ENCODE measurements at regions of chr12 and their contacts with region 1.

Region 1: GRCh38 chr12:93677195-93678064 is at the start of gene CRADD:
- DNase-seq: peak; percentile 92
- H3K4me3 ChIP-seq: peak within 1 kb of the TSS; percentile 61 to 74 (median 68)
- H3K27ac ChIP-seq: peak within 1 kb of the TSS; percentile 90 to 97 (median 94)
- H3K4me1 ChIP-seq: peaks cover 0 to 42% (median 31%) of the 10 kb centered on the region in 4 donors
- H3K27me3 ChIP-seq: no peaks in the 10 kb centered on the region
- CTCF ChIP-seq: no peak
- EP300 ChIP-seq: peak in 2 of 4 donors; percentile 3 to 50
- POLR2A ChIP-seq: peak; percentile 51 to 72
- total RNA-seq, gene CRADD: 43.7 to 98.9 (median 61.0) TPM

Region 2: DNA sequence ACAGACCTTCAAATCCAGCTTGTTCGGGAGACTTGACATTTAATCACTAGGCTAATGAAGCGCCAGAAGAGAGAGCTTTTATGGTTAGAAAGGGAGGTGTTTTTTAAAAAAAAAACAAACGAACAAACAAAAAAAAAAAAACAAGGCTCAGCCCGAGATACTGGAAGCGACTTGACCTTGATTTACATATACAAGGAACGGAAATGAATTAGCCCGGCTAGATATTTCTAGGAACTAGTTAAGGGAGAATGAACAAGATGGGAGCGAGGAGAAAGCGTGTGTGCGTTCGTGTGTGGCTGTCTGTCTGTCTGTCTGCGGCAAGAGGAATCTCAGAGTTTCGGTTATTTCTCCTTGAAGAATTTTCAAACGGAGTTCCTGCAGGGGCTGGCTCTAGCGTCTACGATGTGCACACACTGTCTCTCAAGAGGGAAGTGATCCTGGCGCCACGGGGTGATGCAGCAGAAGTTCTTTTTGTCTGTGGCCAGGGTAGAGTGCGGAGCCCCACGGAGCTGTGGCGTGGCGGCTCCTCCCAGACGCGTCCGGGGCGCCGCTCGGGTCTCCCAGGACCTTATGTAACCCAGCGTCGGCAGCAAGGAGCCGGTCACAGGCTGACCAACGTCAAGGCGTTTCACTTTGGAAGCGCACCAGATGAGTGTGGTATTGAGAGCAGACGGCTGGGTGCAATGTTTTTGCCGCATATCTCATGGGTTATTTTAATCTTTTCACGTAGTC is 86.1 kb before region 1 on chr12:
- intact Hi-C with region 1: loop called (anchors 5 kb)
- DNase-seq: peak; percentile 94
- H3K4me3 ChIP-seq: peak overlapping the region; percentile 46 to 58 (median 54)
- H3K27ac ChIP-seq: peak overlapping the region; percentile 80 to 88 (median 84)
- H3K4me1 ChIP-seq: peaks cover 0 to 29% (median 12%) of the 10 kb centered on the region in 4 donors
- H3K27me3 ChIP-seq: no peaks in the 10 kb centered on the region
- CTCF ChIP-seq: no peak
- EP300 ChIP-seq: peak in 1 of 4 donors; percentile 52
- POLR2A ChIP-seq: peak; percentile 38 to 60

Region 3: DNA sequence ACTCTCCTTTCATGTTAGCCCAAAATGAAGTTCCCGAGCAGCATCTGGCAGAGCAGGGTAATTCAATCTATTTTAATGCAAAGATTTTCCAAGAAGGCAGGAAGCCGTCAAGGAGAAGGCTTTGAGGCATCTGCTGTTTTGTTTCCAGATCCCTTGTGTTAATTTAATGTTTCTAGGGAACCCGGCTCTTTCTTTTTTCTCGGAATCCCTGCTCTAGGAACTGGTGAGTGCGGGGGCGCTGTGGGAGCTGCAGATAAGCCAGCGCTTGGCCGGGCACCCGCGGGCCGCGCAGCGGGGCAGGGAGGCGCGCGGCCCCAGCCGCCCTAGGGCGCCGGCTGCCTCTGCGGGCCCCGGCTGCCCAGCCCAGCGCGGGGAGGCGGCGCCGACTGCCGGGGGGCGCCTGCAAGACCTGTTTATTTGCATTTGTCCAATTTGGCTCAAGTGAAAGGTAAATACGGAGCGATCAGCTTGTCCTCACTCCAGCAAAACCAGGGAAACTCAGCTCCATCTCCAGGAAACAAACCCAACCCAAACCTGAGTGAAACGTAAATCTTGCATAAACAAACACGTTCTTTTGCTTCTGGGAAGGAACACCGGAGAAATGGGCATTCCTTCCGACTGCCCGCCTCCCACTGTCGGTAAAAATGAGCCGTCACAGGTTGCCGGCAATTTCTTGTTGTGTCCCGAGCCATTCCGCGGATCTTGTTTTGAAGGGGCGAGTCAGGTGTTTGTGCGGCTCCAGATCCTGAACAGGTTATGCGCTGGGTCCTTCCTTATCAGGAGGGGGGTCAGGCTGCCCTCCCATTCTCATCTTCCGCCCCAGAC is 64.9 kb after region 1 on chr12:
- intact Hi-C with region 1: loop called (anchors 2 kb)
- DNase-seq: peak; percentile 82
- H3K4me3 ChIP-seq: peak overlapping the region; percentile 43 to 62 (median 57)
- H3K27ac ChIP-seq: peak overlapping the region; percentile 86 to 94 (median 90)
- H3K4me1 ChIP-seq: peaks cover 0 to 71% (median 50%) of the 10 kb centered on the region in 4 donors
- H3K27me3 ChIP-seq: no peaks in the 10 kb centered on the region
- CTCF ChIP-seq: peak in 2 of 4 experiments; percentile 19 to 32
- EP300 ChIP-seq: peak in 2 of 4 donors; percentile 69 to 75
- POLR2A ChIP-seq: no peak

Region 4: DNA sequence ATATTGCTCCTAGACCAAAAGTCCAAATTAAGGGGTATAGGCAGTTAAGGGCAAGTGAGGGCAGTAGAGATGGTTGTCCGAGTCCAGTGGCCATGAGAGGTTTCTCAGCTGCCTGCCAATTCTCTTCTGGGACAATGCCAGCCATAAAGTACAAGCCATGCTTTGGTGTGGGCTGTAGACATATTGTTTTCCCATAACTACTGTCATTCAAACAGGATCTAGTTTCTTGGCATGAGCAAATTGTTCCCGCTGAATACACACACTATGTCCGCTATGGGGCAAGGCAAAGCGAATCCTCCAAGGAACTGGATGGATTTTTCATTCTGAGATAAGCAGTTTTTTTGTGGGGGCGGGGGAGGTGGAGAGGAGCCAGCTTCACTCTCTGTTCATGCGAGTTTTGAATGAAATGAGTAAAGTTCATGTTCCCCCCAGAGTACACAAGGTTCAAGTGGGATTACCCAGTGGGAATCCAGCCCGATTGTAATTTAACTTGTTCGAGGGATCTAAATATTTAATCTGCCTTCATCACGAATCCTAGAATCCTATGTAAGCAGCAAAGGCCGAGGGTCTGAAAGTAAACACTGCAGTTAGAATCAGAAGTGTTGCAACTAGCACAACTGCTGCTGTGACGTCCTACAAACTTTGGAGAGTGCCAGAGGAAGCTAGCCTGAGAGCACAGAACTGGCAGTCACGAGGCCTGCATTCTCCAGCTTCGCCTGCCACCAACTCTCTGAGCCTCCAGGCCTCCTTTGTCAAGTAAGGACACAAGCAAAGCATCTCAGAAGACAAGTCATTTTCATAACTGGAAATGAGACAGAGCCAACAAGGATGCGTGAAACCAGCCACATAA is 136.8 kb after region 1 on chr12:
- intact Hi-C with region 1: loop called (anchors 10 kb)
- DNase-seq: peak; percentile 97
- H3K4me3 ChIP-seq: no peak overlapping the region
- H3K27ac ChIP-seq: peak overlapping the region; percentile 85 to 91 (median 90)
- H3K4me1 ChIP-seq: peaks cover 0 to 78% (median 67%) of the 10 kb centered on the region in 4 donors
- H3K27me3 ChIP-seq: no peaks in the 10 kb centered on the region
- CTCF ChIP-seq: no peak
- EP300 ChIP-seq: peak; percentile 71 to 95 (median 88)
- POLR2A ChIP-seq: no peak

Region 5: GRCh38 chr12:93979189-93979588 is 301.8 kb after region 1 on chr12:
- intact Hi-C with region 1: loop called (anchors 10 kb)
- DNase-seq: no peak
- H3K4me3 ChIP-seq: no peak overlapping the region
- H3K27ac ChIP-seq: no peak overlapping the region
- H3K4me1 ChIP-seq: peaks cover 0 to 7% (median 0%) of the 10 kb centered on the region in 4 donors
- H3K27me3 ChIP-seq: no peaks in the 10 kb centered on the region
- CTCF ChIP-seq: peak in 2 of 4 experiments; percentile 29 to 36
- EP300 ChIP-seq: no peak
- POLR2A ChIP-seq: no peak

Region 6: GRCh38 chr12:94074980-94075928 is 397.8 kb after region 1 on chr12:
- intact Hi-C with region 1: loop called (anchors 5 kb)
- DNase-seq: peak; percentile 90
- H3K4me3 ChIP-seq: no peak overlapping the region
- H3K27ac ChIP-seq: peak overlapping the region; percentile 64 to 80 (median 70)
- H3K4me1 ChIP-seq: peaks cover 0 to 25% (median 17%) of the 10 kb centered on the region in 4 donors
- H3K27me3 ChIP-seq: no peaks in the 10 kb centered on the region
- CTCF ChIP-seq: peak; percentile 46 to 60 (median 52)
- EP300 ChIP-seq: peak in 1 of 4 donors; percentile 61
- POLR2A ChIP-seq: no peak

Region 7: GRCh38 chr12:94101738-94102660 is 424.6 kb after region 1 on chr12:
- intact Hi-C with region 1: loop called (anchors 5 kb)
- DNase-seq: peak; percentile 93
- H3K4me3 ChIP-seq: peak overlapping the region; percentile 37 to 70 (median 63)
- H3K27ac ChIP-seq: peak overlapping the region; percentile 44 to 80 (median 62)
- H3K4me1 ChIP-seq: peaks cover 0 to 16% (median 14%) of the 10 kb centered on the region in 4 donors
- H3K27me3 ChIP-seq: no peaks in the 10 kb centered on the region
- CTCF ChIP-seq: peak; percentile 60 to 79 (median 73)
- EP300 ChIP-seq: no peak
- POLR2A ChIP-seq: no peak